Activated CD8-positive, alpha-beta T cell treated with anti-CD3 and anti-CD28 coated beads for 36 hours (primary cell): ENCODE measurements at regions of chr11 and their contacts with region 1.

Region 1: DNA sequence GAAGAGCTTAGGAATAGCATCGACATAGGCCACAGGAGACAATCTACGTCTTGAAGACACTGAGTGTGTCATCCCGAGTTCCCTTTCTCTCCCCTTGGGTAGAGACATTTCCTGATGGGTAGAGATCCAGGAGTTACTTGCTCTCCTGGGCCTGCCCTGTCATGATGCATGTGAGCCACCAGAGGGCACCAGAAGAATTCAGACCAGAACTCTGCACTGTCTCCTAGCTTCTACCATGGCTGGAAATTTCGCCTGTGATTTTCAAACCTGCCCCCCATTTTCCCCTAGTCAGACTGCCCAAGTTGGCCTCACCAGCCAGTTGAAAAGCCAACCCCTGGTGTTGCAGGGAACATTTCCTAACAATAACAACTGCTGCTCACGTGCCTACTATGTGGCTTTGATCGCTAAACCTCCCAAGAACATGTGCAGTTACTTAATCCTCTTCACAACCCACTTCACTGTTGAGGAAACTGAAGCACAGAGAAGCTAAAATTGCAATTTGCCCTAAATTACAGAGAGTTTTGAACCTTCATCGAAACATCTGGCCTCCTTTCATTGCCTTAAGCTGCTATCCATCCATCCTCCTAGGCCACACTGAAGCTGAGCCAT is 47.2 kb downstream of the C11orf58 start:
- DNase-seq: peak; percentile 73
- ATAC-seq: peak; percentile 89
- H3K4me3 Mint-ChIP-seq: no peak overlapping the region
- H3K27ac Mint-ChIP-seq: no peak overlapping the region
- H3K4me1 Mint-ChIP-seq: no peaks in the 10 kb centered on the region
- H3K27me3 Mint-ChIP-seq: no peaks in the 10 kb centered on the region
- CTCF ChIP-seq: peak; percentile 72

Region 2: DNA sequence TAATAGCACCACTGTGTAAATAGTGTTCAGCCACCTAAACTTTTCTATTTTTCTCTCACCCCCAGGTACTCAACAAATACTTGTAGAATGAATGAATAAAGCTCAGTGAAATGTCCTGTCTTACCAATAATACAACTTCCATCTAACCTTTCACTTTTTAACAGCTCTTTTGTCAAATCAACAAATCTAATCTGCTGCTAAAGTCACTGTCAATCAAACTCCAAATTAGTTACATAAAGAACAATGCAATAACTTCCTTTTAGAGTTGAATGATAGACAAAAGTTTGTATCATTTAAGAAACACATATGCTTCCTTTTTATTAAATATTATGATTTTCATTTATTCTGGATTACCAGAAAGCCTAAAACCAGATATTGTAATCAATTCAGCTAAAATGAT is 81.8 kb before region 1 on chr11:
- CTCF ChIA-PET with region 1: no interaction called
- POLR2A ChIA-PET with region 1: no interaction called
- intact Hi-C with region 1: no loop called
- DNase-seq: no peak
- ATAC-seq: no peak
- H3K4me3 Mint-ChIP-seq: no peak overlapping the region
- H3K27ac Mint-ChIP-seq: no peak overlapping the region
- H3K4me1 Mint-ChIP-seq: no peaks in the 10 kb centered on the region
- H3K27me3 Mint-ChIP-seq: peaks cover 9% of the 10 kb centered on the region
- CTCF ChIP-seq: no peak

Region 3: GRCh38 chr11:16770016-16770415 is 15.6 kb before region 1 on chr11:
- CTCF ChIA-PET with region 1: interaction called, 19 read pairs
- POLR2A ChIA-PET with region 1: no interaction called
- intact Hi-C with region 1: no loop called
- DNase-seq: no peak
- ATAC-seq: no peak
- H3K4me3 Mint-ChIP-seq: no peak overlapping the region
- H3K27ac Mint-ChIP-seq: no peak overlapping the region
- H3K4me1 Mint-ChIP-seq: no peaks in the 10 kb centered on the region
- H3K27me3 Mint-ChIP-seq: no peaks in the 10 kb centered on the region
- CTCF ChIP-seq: no peak

Region 4: DNA sequence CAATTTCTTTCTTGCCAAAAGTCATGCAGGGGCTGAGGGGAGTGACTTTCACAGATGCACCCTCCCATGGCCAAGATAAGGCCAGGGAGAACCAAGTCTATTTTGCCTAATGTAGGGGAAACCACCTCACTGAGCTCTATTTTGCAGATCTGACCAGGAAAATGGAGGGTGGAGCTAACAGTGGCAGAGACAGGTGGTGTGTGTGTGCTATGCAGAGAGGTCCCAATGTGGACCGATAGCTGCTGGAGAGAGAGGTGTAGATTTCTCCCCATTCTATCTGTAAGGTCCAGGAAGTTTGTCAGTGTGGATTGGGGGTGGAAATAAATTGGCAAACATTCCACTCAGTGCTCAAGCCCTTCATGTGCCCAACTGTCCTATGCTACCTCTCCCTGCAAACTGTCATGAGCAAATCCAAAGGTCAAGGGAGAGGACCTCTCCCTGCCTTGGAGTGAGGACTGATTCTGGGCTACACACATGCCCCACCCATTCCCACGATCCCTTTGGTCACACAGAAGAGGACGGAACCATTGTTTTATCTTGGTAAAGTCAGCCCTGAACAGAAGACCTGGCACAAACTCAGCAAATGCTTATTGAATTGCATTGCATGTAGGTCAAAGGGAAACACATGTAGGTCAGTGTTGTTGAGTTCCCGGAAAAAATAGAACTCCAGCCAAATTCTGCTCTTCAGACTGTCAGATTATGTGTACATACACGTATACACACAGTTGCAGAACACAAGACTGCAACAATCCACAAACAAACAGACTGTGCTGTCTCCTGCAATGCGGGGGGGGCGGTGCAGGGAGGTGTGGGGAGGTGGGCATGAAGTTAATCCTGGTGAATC is 18.7 kb after region 1 on chr11:
- CTCF ChIA-PET with region 1: interaction called, 48 read pairs
- POLR2A ChIA-PET with region 1: no interaction called
- intact Hi-C with region 1: no loop called
- DNase-seq: no peak
- ATAC-seq: no peak
- H3K4me3 Mint-ChIP-seq: no peak overlapping the region
- H3K27ac Mint-ChIP-seq: peak overlapping the region; percentile 30
- H3K4me1 Mint-ChIP-seq: peaks cover 6% of the 10 kb centered on the region
- H3K27me3 Mint-ChIP-seq: no peaks in the 10 kb centered on the region
- CTCF ChIP-seq: no peak

Region 5: DNA sequence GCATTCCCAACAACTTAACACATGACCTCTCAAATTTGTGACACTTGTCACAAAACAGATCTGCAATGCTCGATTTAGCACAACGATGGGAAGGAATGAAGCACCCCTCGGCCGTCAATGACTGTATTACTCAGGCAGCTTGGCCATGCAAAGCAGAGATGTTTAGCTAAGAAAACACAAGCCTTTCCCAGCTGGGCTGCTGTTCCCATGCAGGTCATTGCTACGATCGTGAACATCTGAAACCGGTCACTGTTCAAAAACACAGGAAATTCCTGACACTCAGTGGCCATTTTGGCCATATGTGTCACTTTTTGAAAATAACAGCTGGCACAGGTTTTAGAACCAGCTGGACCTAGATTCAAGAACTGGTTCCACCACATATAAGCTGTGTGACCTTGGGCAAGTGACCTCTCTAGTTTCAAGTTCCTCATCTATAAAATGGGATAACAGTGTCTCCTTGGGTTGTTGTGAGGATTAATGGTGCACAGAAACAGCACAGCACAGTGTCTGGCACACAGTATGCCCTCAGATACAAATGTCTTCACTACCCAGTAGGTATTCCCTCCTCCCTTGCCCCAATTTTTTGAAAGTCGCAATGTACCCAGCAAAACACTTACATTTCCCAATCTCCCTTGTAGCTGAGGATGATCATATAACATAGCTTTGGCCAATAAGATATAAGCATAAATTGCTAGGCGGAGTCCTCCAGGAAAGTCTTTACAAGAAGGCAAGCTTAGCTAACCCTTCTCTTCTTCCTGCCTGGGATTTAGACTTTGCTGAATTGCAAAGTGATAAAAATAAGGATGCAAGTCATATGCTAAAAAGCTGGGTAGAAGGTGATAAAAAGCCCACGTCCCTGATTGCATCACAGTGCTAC is 45.9 kb after region 1 on chr11:
- CTCF ChIA-PET with region 1: interaction called, 11 read pairs
- POLR2A ChIA-PET with region 1: no interaction called
- intact Hi-C with region 1: no loop called
- DNase-seq: no peak
- ATAC-seq: no peak
- H3K4me3 Mint-ChIP-seq: no peak overlapping the region
- H3K27ac Mint-ChIP-seq: no peak overlapping the region
- H3K4me1 Mint-ChIP-seq: peaks cover 9% of the 10 kb centered on the region
- H3K27me3 Mint-ChIP-seq: no peaks in the 10 kb centered on the region
- CTCF ChIP-seq: no peak